Heart left ventricle (tissue), 16 donors: ENCODE measurements at regions of chr13 and their contacts with region 1.

Region 1: GRCh38 chr13:106917673-106918556 is 350.0 kb upstream of the ARGLU1 start:
- DNase-seq: peak; percentile 67 to 88 (median 82)
- ATAC-seq: peak; percentile 85 to 92 (median 88)
- H3K4me3 ChIP-seq: peak overlapping the region; percentile 40 to 73 (median 62)
- H3K27ac ChIP-seq: peak overlapping the region; percentile 86 to 98 (median 94)
- H3K4me1 ChIP-seq: peaks cover 0 to 27% (median 8%) of the 10 kb centered on the region in 12 donors
- H3K27me3 ChIP-seq: peaks cover 0 to 3% (median 0%) of the 10 kb centered on the region in 9 donors
- CTCF ChIP-seq: peak; percentile 88 to 98 (median 93)
- POLR2A ChIP-seq: no peak

Region 2: DNA sequence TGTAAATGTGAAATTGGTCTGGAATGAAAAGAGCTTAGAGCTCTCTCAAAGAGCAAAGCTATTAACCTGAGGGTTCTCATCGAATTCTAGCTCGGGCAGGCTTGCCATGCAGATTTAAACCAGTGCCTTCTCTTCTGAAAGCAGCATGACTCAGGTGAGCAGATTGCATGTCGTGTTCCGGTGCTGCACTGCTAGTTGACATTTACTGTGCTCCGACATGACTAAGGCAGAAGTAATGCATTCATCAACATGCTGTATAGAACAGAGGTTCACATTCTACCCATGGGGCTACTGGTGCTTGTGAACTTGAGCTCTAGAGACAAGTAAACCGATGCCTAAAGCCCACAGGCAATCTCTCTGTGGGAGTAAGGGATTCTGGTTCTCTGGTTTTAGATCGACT is 1330.1 kb before region 1 on chr13:
- intact Hi-C with region 1: no loop called
- DNase-seq: no peak
- ATAC-seq: no peak
- H3K4me3 ChIP-seq: no peak overlapping the region
- H3K27ac ChIP-seq: no peak overlapping the region
- H3K4me1 ChIP-seq: no peaks in the 10 kb centered on the region
- H3K27me3 ChIP-seq: no peaks in the 10 kb centered on the region
- CTCF ChIP-seq: no peak
- POLR2A ChIP-seq: no peak

Region 3: GRCh38 chr13:106536244-106537034 is 381.5 kb before region 1 on chr13:
- intact Hi-C with region 1: loop called (anchors 2 to 10 kb)
- DNase-seq: peak; percentile 90 to 96 (median 91)
- ATAC-seq: peak; percentile 70 to 86 (median 82)
- H3K4me3 ChIP-seq: peak overlapping the region; percentile 59 to 83 (median 74)
- H3K27ac ChIP-seq: peak overlapping the region; percentile 51 to 89 (median 74)
- H3K4me1 ChIP-seq: peaks cover 0 to 41% (median 13%) of the 10 kb centered on the region in 12 donors
- H3K27me3 ChIP-seq: peaks cover 0 to 29% (median 0%) of the 10 kb centered on the region in 9 donors
- CTCF ChIP-seq: peak; percentile 87 to 99 (median 97)
- POLR2A ChIP-seq: no peak

Region 4: DNA sequence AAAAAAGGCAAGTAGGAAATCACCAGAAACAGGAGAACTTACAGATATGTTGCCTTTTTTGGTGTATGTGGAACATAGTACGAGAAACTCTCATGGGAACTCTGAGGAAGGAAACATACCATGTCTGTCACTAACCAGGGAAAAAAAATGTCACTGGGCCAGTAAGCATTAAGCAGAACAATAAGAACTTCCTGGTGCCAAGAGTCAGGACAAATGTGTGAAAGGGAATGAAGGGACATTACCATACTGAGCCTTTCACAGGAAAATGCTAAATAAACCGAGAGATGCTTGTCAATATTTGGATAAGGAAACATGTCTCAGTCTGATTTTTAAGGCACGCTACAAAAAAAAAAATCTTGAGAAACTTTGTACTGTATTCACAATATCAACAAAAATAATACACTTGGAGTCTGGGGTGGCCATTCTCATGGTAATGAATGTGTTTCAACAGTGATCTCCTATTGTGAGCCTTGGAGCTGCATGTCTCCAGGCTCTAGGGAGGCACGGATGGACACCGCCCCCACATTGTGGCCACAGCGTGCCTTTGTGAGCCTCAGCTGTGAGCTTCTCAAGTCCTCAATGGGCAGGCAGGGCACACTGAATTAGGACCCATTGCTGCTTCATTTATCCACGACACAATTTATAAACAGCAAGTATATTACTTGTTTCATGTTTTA is 237.0 kb before region 1 on chr13:
- intact Hi-C with region 1: loop called in 5 of 10 experiments (anchors 2 to 10 kb)
- DNase-seq: peak in 3 of 5 donors; percentile 32 to 39 (median 37)
- ATAC-seq: peak in 3 of 4 donors; percentile 20 to 71 (median 56)
- H3K4me3 ChIP-seq: no peak overlapping the region
- H3K27ac ChIP-seq: peak overlapping the region in 11 of 12 donors; percentile 18 to 68 (median 50)
- H3K4me1 ChIP-seq: peaks cover 0 to 27% (median 10%) of the 10 kb centered on the region in 12 donors
- H3K27me3 ChIP-seq: no peaks in the 10 kb centered on the region
- CTCF ChIP-seq: no peak
- POLR2A ChIP-seq: no peak

Region 5: GRCh38 chr13:106709522-106709921 is 208.4 kb before region 1 on chr13:
- intact Hi-C with region 1: loop called in 5 of 10 experiments (anchors 5 kb)
- DNase-seq: peak in 2 of 5 donors; percentile 26 to 41
- ATAC-seq: peak; percentile 32 to 93 (median 86)
- H3K4me3 ChIP-seq: peak overlapping the region in 10 of 12 donors; percentile 1 to 51 (median 36)
- H3K27ac ChIP-seq: peak overlapping the region; percentile 65 to 88 (median 82)
- H3K4me1 ChIP-seq: peaks cover 0 to 51% (median 8%) of the 10 kb centered on the region in 12 donors
- H3K27me3 ChIP-seq: no peaks in the 10 kb centered on the region
- CTCF ChIP-seq: no peak
- POLR2A ChIP-seq: no peak

Region 6: DNA sequence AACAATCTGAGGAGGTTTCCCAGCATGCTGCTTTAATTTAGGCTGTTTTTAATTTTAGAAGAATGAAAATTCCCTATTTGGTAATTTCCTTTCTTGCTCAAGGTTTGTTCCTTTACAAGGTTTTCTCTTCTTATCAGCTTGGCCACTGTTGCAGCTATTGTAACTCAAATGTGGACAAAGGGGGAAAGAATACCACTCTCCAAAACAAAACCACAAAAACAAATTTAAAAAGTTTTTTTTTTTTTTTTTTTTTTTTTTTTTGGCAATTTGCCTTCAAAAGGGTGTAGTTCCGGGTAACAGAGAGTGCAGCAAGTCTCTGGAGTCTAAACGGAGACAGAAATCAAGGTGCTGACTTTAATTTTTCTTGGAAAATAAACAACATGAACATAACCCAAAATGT is 43.6 kb before region 1 on chr13:
- intact Hi-C with region 1: loop called in 1 of 10 experiments (anchors 2 kb)
- DNase-seq: no peak
- ATAC-seq: peak in 1 of 4 donors; percentile 71
- H3K4me3 ChIP-seq: no peak overlapping the region
- H3K27ac ChIP-seq: peak overlapping the region in 11 of 12 donors; percentile 7 to 63 (median 49)
- H3K4me1 ChIP-seq: peaks cover 0 to 19% (median 8%) of the 10 kb centered on the region in 12 donors
- H3K27me3 ChIP-seq: no peaks in the 10 kb centered on the region
- CTCF ChIP-seq: no peak
- POLR2A ChIP-seq: no peak

Region 7: DNA sequence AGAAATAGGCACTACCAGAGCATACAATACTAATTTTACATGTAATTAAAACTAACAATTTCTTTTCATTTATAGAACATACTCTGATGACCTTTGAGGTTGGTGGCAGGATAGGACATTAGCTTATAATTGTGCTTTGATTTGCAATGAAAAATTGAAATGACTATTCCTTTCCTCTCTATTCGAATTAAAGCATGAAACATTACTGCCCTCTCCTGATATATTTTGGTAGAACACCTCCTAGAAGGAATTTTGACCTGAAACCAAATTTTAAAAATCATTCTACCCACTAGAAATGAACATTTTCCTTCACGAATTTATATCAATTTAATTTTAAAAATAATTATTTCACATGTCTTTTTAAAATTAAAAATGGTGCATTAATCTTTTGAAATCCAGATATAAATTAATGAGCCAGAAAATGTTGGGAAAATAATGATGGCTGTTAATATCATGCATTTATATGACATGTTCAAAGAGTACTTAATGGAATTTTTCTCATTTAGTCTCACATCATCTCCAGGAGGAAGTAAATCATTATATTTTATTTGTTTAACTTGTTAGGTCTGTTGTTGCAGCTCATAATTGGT is 206.3 kb after region 1 on chr13:
- intact Hi-C with region 1: loop called in 9 of 10 experiments (anchors 5 to 10 kb)
- DNase-seq: no peak
- ATAC-seq: no peak
- H3K4me3 ChIP-seq: no peak overlapping the region
- H3K27ac ChIP-seq: no peak overlapping the region
- H3K4me1 ChIP-seq: peaks cover 0 to 5% (median 0%) of the 10 kb centered on the region in 12 donors
- H3K27me3 ChIP-seq: no peaks in the 10 kb centered on the region
- CTCF ChIP-seq: peak; percentile 40 to 80 (median 68)
- POLR2A ChIP-seq: no peak